ENCODE measurements at regions of chr1 and their contacts with region 1.

Region 1: DNA sequence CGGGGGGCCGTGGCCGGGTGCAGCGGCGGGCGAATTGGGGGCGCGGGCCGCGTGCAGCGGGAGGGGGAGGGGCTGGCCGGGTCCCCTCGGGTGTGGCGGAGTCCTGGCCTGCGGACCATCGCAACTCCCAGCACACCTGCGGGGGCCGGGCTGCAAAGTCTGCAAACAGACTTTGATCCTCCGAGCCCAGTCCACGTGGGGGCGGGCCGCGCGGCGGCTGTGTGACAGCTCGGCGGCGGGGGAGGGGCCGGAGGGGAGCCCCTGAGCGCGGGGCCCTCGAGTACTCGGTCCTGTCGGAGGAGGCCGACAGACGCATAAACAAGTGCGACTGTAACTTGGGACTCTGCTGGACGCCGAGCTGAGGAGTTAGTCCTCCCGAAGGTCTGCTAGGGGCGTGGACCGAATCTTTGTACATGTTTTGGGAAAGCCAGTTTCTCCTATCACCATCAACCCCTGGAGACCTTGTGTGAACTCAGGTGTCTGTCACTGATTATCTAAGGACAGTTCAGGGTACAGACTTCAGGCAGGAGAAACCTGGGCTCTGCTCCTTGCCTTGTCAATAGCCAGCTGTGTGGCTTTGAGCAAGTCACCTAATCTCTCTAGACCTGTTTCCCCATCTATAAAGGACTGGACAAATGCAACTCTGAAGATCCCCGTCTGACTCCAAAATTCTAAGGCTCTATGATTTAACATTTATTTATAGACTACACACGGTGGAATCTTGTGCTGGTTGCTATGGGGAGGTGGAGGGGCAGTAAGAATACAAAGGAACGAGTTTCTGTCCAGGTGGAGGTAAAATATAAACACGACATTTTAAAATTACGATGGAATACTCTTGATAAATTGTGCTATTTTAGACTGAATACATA is 707 bp upstream of the SLC30A1 start:
- DNase-seq: no peak
- ATAC-seq: peak; percentile 23

Region 2: GRCh38 chr1:211281320-211282022 is 298.2 kb before region 1 on chr1:
- intact Hi-C with region 1: no loop called
- DNase-seq: no peak
- ATAC-seq: no peak

Region 3: GRCh38 chr1:211323156-211324063 is 256.3 kb before region 1 on chr1:
- intact Hi-C with region 1: no loop called
- DNase-seq: no peak
- ATAC-seq: peak; percentile 53

Region 4: DNA sequence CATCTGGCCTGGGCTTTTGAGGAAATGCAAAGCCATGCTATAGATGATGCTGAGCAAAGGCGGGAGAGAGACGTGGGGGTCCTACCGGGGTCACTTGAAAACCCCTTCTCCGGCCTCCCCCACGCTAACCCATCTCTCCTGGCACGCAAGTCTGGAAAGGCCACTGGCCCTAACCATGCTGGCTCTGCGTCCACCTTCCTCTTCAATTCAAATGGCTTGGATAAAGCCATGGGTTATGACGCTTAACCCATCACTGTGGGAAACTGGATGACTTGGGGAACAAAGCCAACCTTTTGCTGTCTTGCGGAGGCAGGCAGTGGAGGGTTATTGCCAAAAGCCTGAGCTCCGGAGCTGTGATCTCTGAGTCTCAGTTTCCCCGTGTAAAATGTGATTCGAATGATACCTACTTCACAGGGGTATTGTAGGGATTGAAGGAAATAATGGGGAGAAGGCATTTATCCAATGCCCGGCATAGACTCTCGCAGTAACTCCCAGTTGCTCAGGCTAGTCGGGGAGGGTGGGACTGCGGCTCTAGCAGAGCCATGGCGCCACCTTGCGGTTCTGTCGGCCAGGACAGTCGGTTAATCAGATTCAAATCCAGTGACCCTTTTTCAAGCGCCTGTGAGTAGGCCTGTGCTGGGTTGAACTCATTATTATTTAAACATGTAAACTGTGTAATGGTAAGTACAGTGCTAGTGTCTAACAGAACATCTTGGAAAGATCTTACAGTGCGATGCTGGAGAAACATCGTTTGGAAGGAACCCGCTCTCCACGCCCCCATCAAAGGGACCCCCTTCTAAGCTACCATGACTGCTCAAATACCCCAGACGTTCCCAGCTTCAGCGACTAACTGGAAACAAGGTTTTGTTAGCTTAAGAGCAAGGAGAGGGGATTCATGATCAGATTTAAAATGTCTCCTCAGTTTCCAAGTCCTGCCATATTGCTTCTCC is 75.4 kb after region 1 on chr1:
- intact Hi-C with region 1: loop called (anchors 10 kb)
- DNase-seq: peak; percentile 95
- ATAC-seq: peak; percentile 96

Region 5: DNA sequence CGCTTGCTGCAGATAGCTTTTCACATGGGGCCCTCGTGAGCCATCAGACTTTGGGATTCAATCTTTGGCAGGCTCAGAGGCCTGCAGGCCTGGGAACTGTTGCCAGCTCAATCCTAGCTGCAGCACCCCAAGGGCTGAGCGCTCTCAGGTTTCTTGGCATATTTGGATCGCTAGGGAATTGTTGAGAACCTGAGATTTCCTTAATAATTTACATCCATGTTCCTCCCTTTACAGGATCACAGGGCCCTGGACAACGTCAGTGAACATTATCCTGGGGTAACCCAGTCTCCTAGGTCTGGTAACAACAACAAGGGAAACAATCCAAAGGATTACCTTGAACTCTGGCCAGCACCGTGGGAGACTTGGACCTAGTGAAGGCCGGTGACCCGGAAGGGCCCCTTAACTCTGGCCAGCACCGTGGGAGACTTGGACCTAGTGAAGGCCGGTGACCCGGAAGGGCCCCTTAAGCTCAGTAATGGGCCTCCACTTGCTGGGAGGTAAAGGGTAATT is 145.1 kb after region 1 on chr1:
- intact Hi-C with region 1: no loop called
- DNase-seq: no peak
- ATAC-seq: peak; percentile 78

Measured in sciatic nerve (tissue), 2 donors.